ENCODE measurements at regions of chr12 and their contacts with region 1.

Region 1: DNA sequence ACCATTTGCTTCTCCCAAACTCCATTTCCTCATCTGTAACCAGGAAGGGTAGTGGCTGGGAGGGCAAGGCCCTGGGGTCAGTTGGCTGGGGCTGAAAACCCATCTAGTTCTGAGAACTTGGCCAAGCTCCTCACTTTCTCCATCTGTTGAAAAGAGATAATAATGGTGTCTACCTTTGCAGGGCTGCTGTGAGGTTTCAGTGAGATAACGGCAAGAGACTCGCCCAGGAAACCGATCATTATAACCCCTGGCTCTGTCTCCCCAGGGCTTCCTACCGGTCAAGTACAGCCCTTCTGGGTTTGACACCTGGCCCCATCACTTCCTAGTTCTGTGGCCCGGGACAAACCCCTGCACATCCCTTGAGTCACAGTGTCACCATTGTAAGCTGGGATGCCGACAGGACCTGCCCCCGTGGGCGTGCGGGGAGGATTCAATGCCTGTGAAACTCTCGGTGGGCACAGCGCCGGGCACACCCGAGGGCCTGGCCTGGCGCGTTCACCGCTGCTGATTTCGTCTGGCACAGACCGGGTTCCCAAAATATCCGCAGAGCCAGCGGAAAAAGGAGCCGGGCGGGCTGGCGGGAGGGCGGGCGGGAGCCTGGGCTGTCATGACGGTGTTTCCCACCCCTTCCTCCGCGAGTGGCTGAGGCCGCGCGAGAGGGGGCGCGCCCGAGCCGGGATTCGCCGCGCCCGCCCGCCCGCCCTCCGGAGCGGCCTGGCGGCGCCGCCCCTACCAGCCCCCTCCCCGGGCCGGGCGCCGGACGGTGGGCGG is 4.4 kb downstream of the KMT5A start:
- DNase-seq: peak; percentile 79
- ATAC-seq: peak; percentile 59
- H3K4me3 Mint-ChIP-seq: peak overlapping the region; percentile 88
- H3K27ac Mint-ChIP-seq: peak overlapping the region; percentile 87
- H3K4me1 Mint-ChIP-seq: peaks cover 36% of the 10 kb centered on the region
- H3K27me3 Mint-ChIP-seq: no peaks in the 10 kb centered on the region
- CTCF ChIP-seq: no peak

Region 2: DNA sequence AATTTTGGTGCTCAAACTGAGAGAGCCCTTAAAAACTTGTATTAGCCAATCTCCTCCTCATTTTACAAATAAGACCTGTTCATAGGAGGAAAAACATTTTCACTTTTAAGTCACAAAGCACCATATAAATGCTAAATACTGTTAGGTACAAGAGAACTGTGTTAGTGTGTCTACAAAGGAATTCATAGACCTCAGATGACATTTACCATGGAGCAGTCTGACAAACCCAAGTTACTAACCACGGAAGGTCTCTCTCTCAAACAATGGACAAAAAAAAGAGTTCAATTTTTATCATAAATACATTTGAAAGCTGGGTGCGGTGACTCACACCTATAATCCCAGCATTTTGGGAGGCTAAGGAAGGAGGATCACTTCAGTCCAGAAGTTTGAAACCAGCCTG is 33.8 kb before region 1 on chr12:
- CTCF ChIA-PET with region 1: no interaction called
- POLR2A ChIA-PET with region 1: no interaction called
- intact Hi-C with region 1: loop called (anchors 5 kb)
- DNase-seq: no peak
- ATAC-seq: no peak
- H3K4me3 Mint-ChIP-seq: no peak overlapping the region
- H3K27ac Mint-ChIP-seq: no peak overlapping the region
- H3K4me1 Mint-ChIP-seq: peaks cover 29% of the 10 kb centered on the region
- H3K27me3 Mint-ChIP-seq: no peaks in the 10 kb centered on the region
- CTCF ChIP-seq: no peak

Region 3: DNA sequence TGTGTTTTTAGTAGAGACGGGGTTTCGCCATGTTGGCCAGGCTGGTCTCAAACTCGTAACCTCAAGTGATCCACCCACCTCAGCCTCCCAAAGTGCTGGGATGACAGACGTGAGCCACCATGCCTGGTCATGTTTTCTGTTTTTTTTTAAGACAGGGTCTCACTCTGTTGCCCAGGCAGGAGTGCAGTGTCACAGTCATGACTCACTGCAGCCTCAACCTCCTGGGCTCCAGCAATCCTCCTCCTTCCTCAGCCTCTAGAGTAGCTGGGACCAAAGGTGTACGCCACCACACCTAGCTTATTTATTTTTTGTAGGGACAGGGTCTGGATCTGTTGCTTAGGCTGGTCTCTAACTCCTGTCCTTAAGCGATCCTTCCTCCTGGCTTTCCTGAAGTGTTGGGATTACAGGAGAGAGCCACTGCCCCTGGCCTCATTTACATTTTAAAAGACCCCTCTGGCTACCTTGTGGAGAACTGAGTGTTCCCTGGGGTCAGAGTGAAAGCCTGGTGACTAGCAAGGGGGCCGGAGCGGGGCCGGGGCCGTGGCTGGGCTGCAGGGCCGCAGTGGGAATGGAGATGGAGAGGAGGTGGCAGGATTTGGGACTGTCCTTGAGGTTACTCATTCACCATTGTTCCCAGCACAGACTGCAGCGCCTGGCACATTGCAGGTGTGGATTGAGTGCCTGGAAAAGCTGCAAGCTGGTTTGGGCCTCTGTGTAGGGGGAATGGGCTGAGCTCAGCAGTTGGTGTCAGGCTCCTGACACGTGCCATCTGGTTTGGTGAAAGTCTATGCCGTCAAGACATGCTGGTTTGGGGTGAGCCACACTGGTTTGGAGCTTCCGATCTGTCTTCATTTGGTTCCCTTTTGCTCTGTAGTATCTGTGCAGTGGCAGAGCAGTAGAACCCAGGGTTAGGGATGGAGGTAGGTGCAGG is 13.7 kb after region 1 on chr12:
- CTCF ChIA-PET with region 1: no interaction called
- POLR2A ChIA-PET with region 1: interaction called, 4 read pairs
- intact Hi-C with region 1: loop called (anchors 2 kb)
- DNase-seq: no peak
- ATAC-seq: no peak
- H3K4me3 Mint-ChIP-seq: no peak overlapping the region
- H3K27ac Mint-ChIP-seq: peak overlapping the region; percentile 8
- H3K4me1 Mint-ChIP-seq: peaks cover 8% of the 10 kb centered on the region
- H3K27me3 Mint-ChIP-seq: no peaks in the 10 kb centered on the region
- CTCF ChIP-seq: no peak

Region 4: DNA sequence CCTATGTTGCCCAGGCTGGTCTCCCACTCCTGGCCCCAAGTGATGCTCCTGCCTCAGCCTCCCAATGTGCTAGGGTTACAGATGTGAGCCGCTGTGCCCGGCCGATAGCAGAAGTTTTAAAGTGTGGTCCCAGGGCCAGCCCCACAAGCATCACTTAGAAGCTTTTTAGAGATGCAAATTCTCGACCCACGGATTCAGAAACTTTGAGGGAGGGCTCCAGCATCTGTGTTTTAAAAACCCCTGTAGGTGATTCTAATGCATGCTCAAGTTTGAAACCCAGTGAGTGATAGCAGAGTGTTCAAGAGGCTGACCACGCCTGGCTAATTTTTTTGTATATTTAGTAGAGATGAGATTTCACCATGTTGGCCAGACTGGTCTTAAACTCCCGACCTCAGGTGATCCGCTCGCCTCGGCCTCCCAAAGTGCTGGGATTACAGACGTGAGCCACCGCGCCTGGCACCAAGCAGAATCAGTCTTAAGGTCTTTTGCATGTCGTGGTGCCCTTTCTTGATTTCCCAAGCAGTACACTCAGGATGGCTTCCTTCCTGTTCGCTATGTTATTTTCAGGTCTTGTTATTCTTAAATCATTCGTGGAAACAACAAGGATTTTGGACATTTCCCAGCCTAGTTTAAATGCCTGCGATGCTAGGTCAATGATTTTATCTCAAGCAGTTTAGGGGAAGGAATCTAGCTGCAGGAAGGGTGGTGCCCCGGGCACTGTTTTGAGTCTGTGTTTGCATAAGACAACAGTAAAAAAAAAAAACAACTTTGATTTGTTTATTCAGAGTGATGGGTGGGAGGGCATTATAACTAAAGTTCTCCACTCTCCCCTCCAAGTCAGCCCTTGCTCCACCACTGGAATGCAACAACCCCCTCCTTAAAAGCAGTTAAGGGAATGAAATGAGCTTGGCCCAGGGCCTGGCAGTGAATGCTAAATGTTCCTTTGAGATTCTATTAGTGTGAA is 57.3 kb after region 1 on chr12:
- CTCF ChIA-PET with region 1: no interaction called
- POLR2A ChIA-PET with region 1: interaction called, 10 read pairs
- intact Hi-C with region 1: no loop called
- DNase-seq: no peak
- ATAC-seq: peak; percentile 53
- H3K4me3 Mint-ChIP-seq: peak overlapping the region; percentile 75
- H3K27ac Mint-ChIP-seq: peak overlapping the region; percentile 93
- H3K4me1 Mint-ChIP-seq: peaks cover 59% of the 10 kb centered on the region
- H3K27me3 Mint-ChIP-seq: no peaks in the 10 kb centered on the region
- CTCF ChIP-seq: no peak

Region 5: GRCh38 chr12:123457980-123458783 is 69.8 kb after region 1 on chr12 and contains the start of gene SNRNP35:
- CTCF ChIA-PET with region 1: interaction called, 4 read pairs
- POLR2A ChIA-PET with region 1: interaction called, 21 read pairs
- intact Hi-C with region 1: loop called (anchors 1 kb)
- DNase-seq: peak; percentile 84
- ATAC-seq: peak; percentile 79
- H3K4me3 Mint-ChIP-seq: peak within 1 kb of the TSS; percentile 100
- H3K27ac Mint-ChIP-seq: peak within 1 kb of the TSS; percentile 100
- H3K4me1 Mint-ChIP-seq: peaks cover 33% of the 10 kb centered on the region
- H3K27me3 Mint-ChIP-seq: no peaks in the 10 kb centered on the region
- CTCF ChIP-seq: no peak
- total RNA-seq, gene SNRNP35: 39.5 and 51.5 TPM in 2 replicates

Region 6: GRCh38 chr12:123601602-123602489 is 213.5 kb after region 1 on chr12 and contains the start of gene DDX55:
- CTCF ChIA-PET with region 1: no interaction called
- POLR2A ChIA-PET with region 1: interaction called, 8 read pairs
- intact Hi-C with region 1: loop called (anchors 2 kb)
- DNase-seq: peak; percentile 86
- ATAC-seq: peak; percentile 89
- H3K4me3 Mint-ChIP-seq: peak within 1 kb of the TSS; percentile 97
- H3K27ac Mint-ChIP-seq: peak within 1 kb of the TSS; percentile 92
- H3K4me1 Mint-ChIP-seq: peaks cover 24% of the 10 kb centered on the region
- H3K27me3 Mint-ChIP-seq: no peaks in the 10 kb centered on the region
- CTCF ChIP-seq: no peak
- total RNA-seq, gene DDX55: 28.8 and 35.0 TPM in 2 replicates